ENCODE measurements at regions of chr2 and their contacts with region 1.

Region 1: GRCh38 chr2:161992526-161992925 is 81.5 kb downstream of the DPP4 start:
- DNase-seq: peak; percentile 77
- H3K4me3 Mint-ChIP-seq: peak overlapping the region; percentile 73
- H3K27ac Mint-ChIP-seq: peak overlapping the region; percentile 92
- H3K4me1 Mint-ChIP-seq: peaks cover 61% of the 10 kb centered on the region
- H3K27me3 Mint-ChIP-seq: no peaks in the 10 kb centered on the region

Region 2: GRCh38 chr2:162007447-162008040 is 15.0 kb after region 1 on chr2:
- CTCF ChIA-PET with region 1: interaction called, 14 read pairs
- POLR2A ChIA-PET with region 1: interaction called, 3 read pairs
- intact Hi-C with region 1: loop called (anchors 2 kb)
- DNase-seq: no peak
- H3K4me3 Mint-ChIP-seq: no peak overlapping the region
- H3K27ac Mint-ChIP-seq: no peak overlapping the region
- H3K4me1 Mint-ChIP-seq: peaks cover 37% of the 10 kb centered on the region
- H3K27me3 Mint-ChIP-seq: no peaks in the 10 kb centered on the region

Region 3: DNA sequence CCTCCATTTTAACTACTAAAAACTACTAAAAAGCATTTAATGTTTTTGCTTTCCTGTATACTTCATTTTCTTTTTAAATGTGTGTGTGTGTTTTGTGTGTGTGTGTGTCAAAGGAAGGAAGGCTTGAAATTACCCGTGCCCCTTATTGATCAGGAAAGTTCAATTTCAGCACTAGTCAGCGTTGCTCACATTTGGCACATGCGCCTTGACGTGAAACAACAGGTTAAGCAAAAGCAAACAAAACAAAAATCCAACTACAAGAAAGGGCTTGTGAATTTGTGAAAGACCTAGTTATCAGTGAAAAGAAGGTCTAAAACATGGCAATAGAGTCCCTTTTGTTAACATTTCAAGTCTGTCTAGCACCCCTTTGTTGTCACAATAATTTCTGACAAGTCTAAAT is 773.6 kb after region 1 on chr2:
- CTCF ChIA-PET with region 1: no interaction called
- POLR2A ChIA-PET with region 1: no interaction called
- intact Hi-C with region 1: no loop called
- DNase-seq: no peak
- H3K4me3 Mint-ChIP-seq: no peak overlapping the region
- H3K27ac Mint-ChIP-seq: no peak overlapping the region
- H3K4me1 Mint-ChIP-seq: no peaks in the 10 kb centered on the region
- H3K27me3 Mint-ChIP-seq: no peaks in the 10 kb centered on the region

Measured in activated CD4-positive, alpha-beta memory T cell treated with anti-CD3 and anti-CD28 coated beads for 36 hours (primary cell).